Activated B cell treated with CpG ODN at 0.5 μM for 24 hours (primary cell): ENCODE measurements at regions of chr5 and their contacts with region 1.

Region 1: GRCh38 chr5:154767576-154767975 is 12.4 kb downstream of the LARP1 start:
- DNase-seq: no peak
- ATAC-seq: peak; percentile 25
- H3K4me3 Mint-ChIP-seq: peak overlapping the region; percentile 36
- H3K27ac Mint-ChIP-seq: peak overlapping the region; percentile 37
- H3K4me1 Mint-ChIP-seq: peaks cover 76% of the 10 kb centered on the region
- H3K27me3 Mint-ChIP-seq: no peaks in the 10 kb centered on the region
- CTCF ChIP-seq: no peak

Region 2: DNA sequence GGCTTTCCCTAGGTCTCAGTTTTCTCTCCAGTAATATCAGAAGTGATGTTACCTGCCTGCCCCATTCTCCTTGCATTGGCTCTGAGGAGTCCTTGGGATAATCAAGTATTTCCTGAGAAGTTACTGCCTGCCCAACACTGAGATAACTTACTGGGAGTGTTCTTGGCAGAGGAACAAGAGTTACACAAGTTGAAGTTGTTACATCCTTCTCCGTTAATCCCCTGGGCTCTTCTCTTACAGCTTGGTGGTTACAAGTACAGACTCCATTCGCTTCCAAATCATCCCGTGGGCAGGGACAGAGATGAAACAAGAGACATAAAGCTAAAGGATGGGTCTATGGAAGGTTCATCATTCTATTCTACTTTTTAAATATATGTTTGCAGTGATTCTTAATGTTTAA is 395.9 kb before region 1 on chr5:
- CTCF ChIA-PET with region 1: no interaction called
- POLR2A ChIA-PET with region 1: no interaction called
- intact Hi-C with region 1: no loop called
- DNase-seq: no peak
- ATAC-seq: no peak
- H3K4me3 Mint-ChIP-seq: no peak overlapping the region
- H3K27ac Mint-ChIP-seq: no peak overlapping the region
- H3K4me1 Mint-ChIP-seq: no peaks in the 10 kb centered on the region
- H3K27me3 Mint-ChIP-seq: no peaks in the 10 kb centered on the region
- CTCF ChIP-seq: no peak

Region 3: GRCh38 chr5:154740483-154740882 is 27.1 kb before region 1 on chr5:
- CTCF ChIA-PET with region 1: no interaction called
- POLR2A ChIA-PET with region 1: no interaction called
- intact Hi-C with region 1: no loop called
- DNase-seq: no peak
- ATAC-seq: no peak
- H3K4me3 Mint-ChIP-seq: no peak overlapping the region
- H3K27ac Mint-ChIP-seq: no peak overlapping the region
- H3K4me1 Mint-ChIP-seq: no peaks in the 10 kb centered on the region
- H3K27me3 Mint-ChIP-seq: no peaks in the 10 kb centered on the region
- CTCF ChIP-seq: no peak

Region 4: GRCh38 chr5:154783774-154784460 is 16.3 kb after region 1 on chr5:
- CTCF ChIA-PET with region 1: no interaction called
- POLR2A ChIA-PET with region 1: no interaction called
- intact Hi-C with region 1: loop called (anchors 2 kb)
- DNase-seq: no peak
- ATAC-seq: no peak
- H3K4me3 Mint-ChIP-seq: no peak overlapping the region
- H3K27ac Mint-ChIP-seq: no peak overlapping the region
- H3K4me1 Mint-ChIP-seq: peaks cover 92% of the 10 kb centered on the region
- H3K27me3 Mint-ChIP-seq: no peaks in the 10 kb centered on the region
- CTCF ChIP-seq: no peak